ENCODE measurements at regions of chr3 and their contacts with region 1.

Region 1: GRCh38 chr3:28853830-28854229 is 427.0 kb upstream of the RBMS3 start:
- DNase-seq: no peak
- H3K4me3 Mint-ChIP-seq: no peak overlapping the region
- H3K27ac Mint-ChIP-seq: no peak overlapping the region
- H3K4me1 Mint-ChIP-seq: no peaks in the 10 kb centered on the region
- H3K27me3 Mint-ChIP-seq: no peaks in the 10 kb centered on the region
- CTCF ChIP-seq: no peak

Region 2: DNA sequence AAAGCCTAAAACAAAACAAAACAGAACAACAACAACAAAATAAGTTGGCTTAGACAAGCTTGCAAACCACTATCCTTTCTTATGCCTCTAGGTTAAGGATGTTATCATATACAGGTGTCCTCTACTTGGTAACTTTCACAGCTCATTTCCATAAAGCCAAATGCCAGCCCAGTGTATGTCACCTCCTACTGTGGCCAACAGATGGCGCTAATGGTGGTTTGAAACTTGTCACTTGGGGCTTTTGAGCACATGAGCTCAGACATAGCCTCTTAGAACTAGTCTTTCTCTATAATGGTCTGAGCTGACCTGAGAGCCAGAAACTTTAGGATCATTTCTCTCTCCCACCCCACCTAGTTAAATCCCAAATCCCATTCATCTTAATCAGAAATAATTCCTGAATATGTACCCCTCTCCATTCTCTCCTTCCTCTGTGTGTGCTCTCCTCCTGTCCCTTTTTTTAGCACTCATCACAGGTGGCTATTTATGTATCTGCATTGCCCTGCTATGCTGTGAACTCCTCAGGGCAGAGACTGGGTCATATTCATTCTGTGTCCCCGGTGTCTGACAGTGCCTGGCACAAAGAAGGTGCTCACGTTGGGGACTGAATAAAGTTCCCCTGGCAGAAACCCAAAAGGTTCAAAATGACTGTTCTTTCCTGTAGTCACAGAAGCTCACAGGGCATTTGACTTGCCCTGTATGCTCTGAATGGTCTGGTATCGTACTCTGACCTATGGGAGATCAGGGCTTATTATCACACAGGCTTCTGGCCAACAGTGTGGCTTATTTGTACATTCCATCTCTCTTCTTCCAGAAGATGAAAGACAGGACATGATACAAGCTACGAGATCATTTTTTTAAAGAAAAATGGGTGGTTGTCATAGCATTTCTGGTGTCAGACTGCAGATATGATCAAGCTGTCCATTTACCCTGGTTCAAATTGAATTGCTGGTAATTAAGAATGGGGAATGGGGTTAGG is 185.9 kb before region 1 on chr3:
- CTCF ChIA-PET with region 1: interaction called, 3 read pairs
- intact Hi-C with region 1: loop called (anchors 10 kb)
- DNase-seq: peak; percentile 63
- H3K4me3 Mint-ChIP-seq: no peak overlapping the region
- H3K27ac Mint-ChIP-seq: no peak overlapping the region
- H3K4me1 Mint-ChIP-seq: no peaks in the 10 kb centered on the region
- H3K27me3 Mint-ChIP-seq: no peaks in the 10 kb centered on the region
- CTCF ChIP-seq: peak; percentile 48

Region 3: DNA sequence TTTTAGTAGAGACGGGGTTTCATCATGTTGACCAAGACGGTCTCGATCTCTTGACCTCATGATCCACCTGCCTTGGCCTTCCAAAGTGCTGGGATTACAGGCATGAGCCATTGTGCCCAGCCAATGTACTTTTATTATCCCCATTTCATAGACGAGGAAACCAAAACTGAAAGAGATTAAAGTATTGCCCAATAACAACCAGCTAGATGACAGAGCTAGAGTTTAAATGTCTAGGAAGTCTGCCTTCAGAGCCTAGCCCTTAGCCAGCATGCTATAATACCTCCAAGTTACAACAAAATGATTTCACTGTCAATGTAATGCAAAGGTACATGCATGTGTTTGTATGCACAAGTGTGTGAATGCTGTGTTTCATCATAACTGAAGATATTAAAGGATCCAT is 37.7 kb after region 1 on chr3:
- CTCF ChIA-PET with region 1: no interaction called
- intact Hi-C with region 1: no loop called
- DNase-seq: no peak
- H3K4me3 Mint-ChIP-seq: no peak overlapping the region
- H3K27ac Mint-ChIP-seq: no peak overlapping the region
- H3K4me1 Mint-ChIP-seq: no peaks in the 10 kb centered on the region
- H3K27me3 Mint-ChIP-seq: no peaks in the 10 kb centered on the region
- CTCF ChIP-seq: no peak

Region 4: GRCh38 chr3:28935146-28935545 is 81.3 kb after region 1 on chr3:
- CTCF ChIA-PET with region 1: no interaction called
- intact Hi-C with region 1: no loop called
- DNase-seq: no peak
- H3K4me3 Mint-ChIP-seq: no peak overlapping the region
- H3K27ac Mint-ChIP-seq: no peak overlapping the region
- H3K4me1 Mint-ChIP-seq: no peaks in the 10 kb centered on the region
- H3K27me3 Mint-ChIP-seq: no peaks in the 10 kb centered on the region
- CTCF ChIP-seq: no peak